AG04450 (cell line): ENCODE measurements at regions of chr14 and their contacts with region 1.

Region 1: DNA sequence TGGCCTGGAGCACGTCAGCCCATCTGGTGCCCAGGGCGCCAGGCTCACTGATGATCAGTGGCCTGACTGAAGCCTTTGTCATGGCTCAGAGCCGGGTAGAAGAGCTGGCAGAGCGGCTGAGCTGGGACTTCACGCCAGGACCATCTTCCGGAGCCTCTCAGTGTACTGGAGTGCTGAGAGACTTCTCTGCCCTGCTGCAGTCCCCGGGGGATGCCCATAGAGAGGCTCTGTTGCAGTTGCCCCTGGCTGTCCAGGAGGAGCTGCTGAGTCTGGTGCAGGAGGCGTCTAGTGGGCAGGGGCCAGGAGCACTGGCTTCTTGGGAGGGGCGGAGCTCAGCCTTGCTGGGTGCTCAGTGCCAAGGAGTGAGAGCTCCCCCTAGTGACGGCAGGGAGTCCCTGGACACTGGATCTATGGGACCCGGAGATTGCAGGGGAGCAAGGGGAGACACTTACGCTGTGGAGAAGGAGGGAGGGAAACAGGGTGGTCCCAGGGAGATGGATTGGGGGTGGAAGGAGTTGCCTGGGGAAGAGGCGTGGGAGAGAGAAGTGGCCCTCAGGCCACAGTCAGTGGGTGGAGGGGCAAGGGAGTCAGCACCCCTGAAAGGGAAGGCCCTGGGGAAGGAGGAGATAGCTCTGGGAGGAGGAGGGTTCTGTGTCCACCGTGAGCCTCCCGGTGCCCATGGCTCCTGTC is 2.0 kb downstream of the KHNYN start:
- DNase-seq: peak; percentile 85
- H3K4me3 ChIP-seq: peak overlapping the region; percentile 82
- H3K27ac ChIP-seq: no peak overlapping the region
- H3K27me3 ChIP-seq: no peaks in the 10 kb centered on the region
- CTCF ChIP-seq: peak; percentile 97

Region 2: DNA sequence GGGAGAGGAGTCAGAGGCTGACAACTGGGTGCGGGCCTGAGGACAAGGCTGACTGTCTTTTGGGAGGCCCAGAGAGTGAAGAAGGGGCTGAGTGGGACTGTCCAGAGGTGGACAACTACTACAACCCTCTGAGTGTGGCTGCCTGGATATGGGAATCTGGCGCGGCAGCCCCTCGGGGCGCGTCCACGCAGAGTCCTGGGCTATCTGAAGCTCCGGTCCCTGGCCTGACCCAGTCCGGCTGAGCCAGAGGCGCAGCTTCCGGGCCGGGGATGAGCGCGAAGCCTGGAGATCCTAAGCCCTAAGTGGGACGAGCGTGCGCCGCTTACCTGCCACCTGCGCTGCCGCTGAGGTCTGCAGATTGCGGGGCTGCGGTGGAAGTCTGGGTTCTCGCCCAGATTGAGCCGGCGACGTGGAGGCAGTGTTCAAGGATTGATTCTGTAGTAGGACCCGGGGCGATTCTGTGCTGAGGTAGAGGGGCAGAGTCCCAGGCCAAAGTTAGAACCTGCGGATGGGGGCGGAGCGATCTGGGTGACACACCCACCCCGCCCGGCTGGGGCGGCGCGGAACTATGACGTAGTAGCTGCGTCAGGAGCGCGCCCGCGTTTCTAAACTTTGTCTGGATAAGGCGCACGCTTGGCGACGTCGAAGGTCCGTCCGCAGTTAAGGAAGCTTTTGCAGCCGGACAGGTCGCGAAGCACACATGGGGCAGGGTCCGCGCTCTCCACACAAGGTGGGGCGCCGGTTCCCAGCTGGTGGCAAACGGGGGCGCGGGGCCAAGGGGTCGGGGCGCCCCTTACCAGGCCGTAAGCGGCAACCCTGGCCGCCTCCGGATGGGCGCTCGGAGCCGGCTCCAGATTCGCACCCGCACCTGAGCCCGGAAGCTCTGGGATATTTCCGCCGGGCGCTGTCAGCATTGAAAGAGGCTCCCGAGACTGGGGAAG is 132.2 kb before region 1 on chr14 and contains the starts of genes DHRS1 and NOP9:
- CTCF ChIA-PET with region 1: interaction called, 12 read pairs
- POLR2A ChIA-PET with region 1: interaction called, 3 read pairs
- DNase-seq: peak; percentile 54
- H3K4me3 ChIP-seq: peak within 1 kb of the TSS; percentile 96
- H3K27ac ChIP-seq: peak within 1 kb of the TSS; percentile 57
- H3K27me3 ChIP-seq: no peaks in the 10 kb centered on the region
- CTCF ChIP-seq: no peak
- polyA plus RNA-seq, gene DHRS1: 33.8 and 36.6 TPM in 2 replicates
- polyA plus RNA-seq, gene NOP9: 12.0 and 13.7 TPM in 2 replicates

Region 3: DNA sequence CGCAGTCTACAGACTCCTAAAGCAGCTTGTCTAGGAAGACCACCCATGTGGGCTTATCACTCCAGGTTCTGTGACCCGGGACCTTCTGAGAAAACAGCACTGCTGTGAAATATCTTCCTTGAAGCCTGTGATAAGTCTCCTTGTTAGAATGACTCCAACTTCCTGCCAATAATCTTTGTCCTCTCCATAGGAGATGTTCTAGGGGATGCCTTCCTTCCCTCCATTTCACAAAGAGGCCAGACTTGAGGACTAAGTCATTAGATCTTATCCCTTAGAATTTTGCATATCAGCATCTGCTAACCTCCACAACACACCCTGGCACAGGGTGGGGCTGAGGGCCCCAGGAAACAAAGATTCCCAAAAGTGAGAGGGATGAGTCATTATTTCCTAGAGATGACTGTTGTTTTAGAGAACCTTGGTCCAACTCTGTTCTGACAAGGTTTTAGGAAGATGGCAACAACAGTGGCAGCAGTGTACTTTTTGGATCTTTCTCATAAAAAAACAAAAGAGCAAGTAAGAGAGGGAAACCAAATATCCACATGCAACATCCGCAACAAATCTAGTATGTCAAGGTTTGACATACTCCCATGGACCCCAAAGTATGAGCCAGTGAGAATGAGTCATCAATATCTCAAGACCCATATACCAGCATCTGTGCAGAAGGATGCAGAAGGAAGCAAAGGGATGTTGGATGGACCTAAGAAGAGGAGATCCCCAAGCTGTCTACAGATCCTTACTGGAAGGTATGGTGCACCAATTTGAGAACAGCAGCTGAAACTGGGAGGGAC is 114.4 kb before region 1 on chr14:
- CTCF ChIA-PET with region 1: interaction called, 712 read pairs
- POLR2A ChIA-PET with region 1: no interaction called
- DNase-seq: no peak
- H3K4me3 ChIP-seq: no peak overlapping the region
- H3K27ac ChIP-seq: no peak overlapping the region
- H3K27me3 ChIP-seq: peaks cover 19% of the 10 kb centered on the region
- CTCF ChIP-seq: no peak

Region 4: GRCh38 chr14:24351517-24351916 is 80.2 kb before region 1 on chr14:
- CTCF ChIA-PET with region 1: interaction called, 14 read pairs
- POLR2A ChIA-PET with region 1: interaction called, 7 read pairs
- DNase-seq: no peak
- H3K4me3 ChIP-seq: no peak overlapping the region
- H3K27ac ChIP-seq: no peak overlapping the region
- H3K27me3 ChIP-seq: peaks cover 32% of the 10 kb centered on the region
- CTCF ChIP-seq: no peak; the same call in 1 of the 2 replicates

Region 5: GRCh38 chr14:24372701-24373416 is 58.9 kb before region 1 on chr14:
- CTCF ChIA-PET with region 1: interaction called, 33 read pairs
- POLR2A ChIA-PET with region 1: interaction called, 5 read pairs
- DNase-seq: no peak
- H3K4me3 ChIP-seq: no peak overlapping the region
- H3K27ac ChIP-seq: no peak overlapping the region
- H3K27me3 ChIP-seq: no peaks in the 10 kb centered on the region
- CTCF ChIP-seq: no peak

Region 6: DNA sequence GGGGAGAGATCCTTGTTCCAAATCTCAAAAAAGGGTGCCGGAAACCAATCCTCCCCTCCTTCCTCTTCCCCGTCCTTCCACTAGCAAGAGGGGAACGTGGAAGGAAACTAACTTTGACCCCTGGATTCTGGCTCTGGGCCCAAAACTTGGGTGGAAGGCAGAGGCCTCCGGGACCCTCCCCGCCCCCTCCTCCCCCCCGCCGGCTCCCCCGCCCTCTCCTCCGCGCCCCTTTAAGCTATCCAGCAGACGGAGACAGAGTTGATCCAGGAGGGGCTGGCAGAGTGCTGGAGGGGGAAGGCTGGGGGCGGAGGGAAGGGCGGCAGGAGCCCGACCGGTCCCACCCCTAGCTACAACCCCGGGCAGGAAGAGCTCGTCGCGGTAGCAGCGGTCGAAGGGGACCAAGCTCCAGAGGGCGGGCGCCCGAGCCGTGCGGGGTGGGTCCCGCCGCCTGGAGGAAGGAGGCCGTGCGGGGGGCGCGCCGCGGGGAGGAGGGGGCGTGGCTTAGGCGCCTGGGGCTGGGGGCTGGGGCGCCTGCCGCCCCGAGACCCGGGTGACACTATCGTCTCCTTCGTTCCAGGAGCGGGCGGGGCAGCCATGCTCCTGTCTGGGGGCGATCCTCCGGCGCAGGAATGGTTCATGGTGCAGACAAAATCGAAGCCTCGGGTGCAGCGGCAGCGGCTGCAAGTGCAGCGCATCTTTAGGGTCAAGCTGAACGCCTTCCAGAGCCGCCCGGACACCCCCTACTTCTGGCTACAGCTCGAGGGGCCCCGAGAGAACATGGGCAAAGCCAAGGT is 32.9 kb before region 1 on chr14 and contains the start of gene NYNRIN:
- CTCF ChIA-PET with region 1: interaction called, 24 read pairs
- POLR2A ChIA-PET with region 1: interaction called, 4 read pairs
- DNase-seq: no peak
- H3K4me3 ChIP-seq: peak within 1 kb of the TSS; percentile 66
- H3K27ac ChIP-seq: no peak within 1 kb of the TSS
- H3K27me3 ChIP-seq: no peaks in the 10 kb centered on the region
- CTCF ChIP-seq: no peak
- polyA plus RNA-seq, gene NYNRIN: 10.4 and 10.5 TPM in 2 replicates

Region 7: GRCh38 chr14:24418492-24418873 is 13.2 kb before region 1 on chr14:
- CTCF ChIA-PET with region 1: interaction called, 41 read pairs
- POLR2A ChIA-PET with region 1: interaction called, 3 read pairs
- DNase-seq: no peak
- H3K4me3 ChIP-seq: no peak overlapping the region
- H3K27ac ChIP-seq: no peak overlapping the region
- H3K27me3 ChIP-seq: peaks cover 29% of the 10 kb centered on the region
- CTCF ChIP-seq: no peak

Region 8: DNA sequence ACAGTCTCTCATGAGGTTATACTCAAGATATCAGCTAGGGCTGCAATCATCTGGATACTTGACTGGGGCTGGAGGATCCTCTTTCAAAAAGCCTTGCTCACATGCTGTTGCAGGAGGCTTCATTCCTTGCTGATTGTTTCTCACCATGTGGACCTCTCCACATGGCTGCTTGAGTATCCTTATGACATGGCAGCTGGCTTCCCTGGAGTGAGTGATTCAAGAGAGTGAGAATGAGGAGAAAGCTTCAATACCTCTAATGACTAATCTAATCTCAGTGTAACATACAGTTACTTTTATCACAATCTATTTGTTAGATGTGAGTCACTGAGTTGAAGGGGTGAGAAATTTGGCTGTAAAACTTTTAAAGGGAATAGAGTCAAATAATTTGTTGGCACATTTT is 25.3 kb after region 1 on chr14:
- CTCF ChIA-PET with region 1: no interaction called
- POLR2A ChIA-PET with region 1: no interaction called
- DNase-seq: no peak
- H3K4me3 ChIP-seq: no peak overlapping the region
- H3K27ac ChIP-seq: no peak overlapping the region
- H3K27me3 ChIP-seq: no peaks in the 10 kb centered on the region
- CTCF ChIP-seq: no peak

Region 9: DNA sequence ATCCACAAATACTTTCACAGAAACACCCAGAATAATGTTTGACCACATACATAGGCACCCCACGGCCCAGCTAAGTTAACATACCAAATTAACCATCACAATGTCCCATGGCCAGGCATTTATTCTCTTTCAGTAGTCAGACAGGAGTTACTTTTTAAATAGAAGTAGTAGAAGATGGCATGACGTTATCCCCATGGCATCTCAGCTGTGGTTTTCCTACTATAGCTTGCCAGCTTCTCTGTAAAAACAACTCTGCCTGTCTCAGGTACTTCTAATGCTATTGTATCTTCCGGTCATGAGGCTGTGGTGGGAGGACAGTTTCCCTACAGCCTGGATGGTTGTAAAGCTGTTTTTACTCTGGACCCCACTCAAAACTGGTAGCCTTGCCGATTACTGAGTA is 125.0 kb after region 1 on chr14:
- CTCF ChIA-PET with region 1: no interaction called
- POLR2A ChIA-PET with region 1: no interaction called
- DNase-seq: no peak
- H3K4me3 ChIP-seq: no peak overlapping the region
- H3K27ac ChIP-seq: no peak overlapping the region
- H3K27me3 ChIP-seq: no peaks in the 10 kb centered on the region
- CTCF ChIP-seq: no peak